Right ventricle myocardium inferior (tissue), 1 donor: ENCODE measurements at regions of chr12 and their contacts with region 1.

Region 1: GRCh38 chr12:6229224-6230218 is 29.3 kb downstream of the CD9 start:
- DNase-seq: no peak
- ATAC-seq: no peak

Region 2: GRCh38 chr12:6062757-6063735 is 166.5 kb before region 1 on chr12:
- intact Hi-C with region 1: no loop called
- DNase-seq: no peak
- ATAC-seq: peak; percentile 47

Region 3: DNA sequence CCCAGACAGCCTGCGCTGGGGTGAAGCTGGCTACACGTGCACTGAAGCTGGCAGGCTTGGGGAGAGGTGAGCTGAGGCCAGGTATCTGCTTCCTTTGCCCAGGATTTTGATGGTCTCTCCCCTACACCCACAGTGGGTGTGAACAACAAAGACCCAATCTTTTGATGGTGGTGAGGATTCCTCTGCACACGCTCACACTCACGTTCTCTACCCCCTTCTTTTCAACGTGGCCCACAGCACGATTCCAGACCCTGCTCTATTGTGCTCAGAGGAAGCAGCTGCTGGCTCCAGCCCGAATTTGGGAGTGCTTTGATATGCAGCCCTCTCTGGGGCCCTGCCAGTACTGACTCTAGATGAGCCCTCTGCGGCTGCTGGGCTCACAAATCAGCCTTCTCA is 24.4 kb before region 1 on chr12:
- intact Hi-C with region 1: loop called (anchors 2 kb)
- DNase-seq: peak; percentile 86
- ATAC-seq: peak; percentile 56

Region 4: GRCh38 chr12:6250343-6250742 is 20.8 kb after region 1 on chr12:
- intact Hi-C with region 1: no loop called
- DNase-seq: no peak
- ATAC-seq: peak; percentile 67

Region 5: GRCh38 chr12:6278439-6279255 is 49.1 kb after region 1 on chr12:
- intact Hi-C with region 1: loop called (anchors 2 kb)
- DNase-seq: peak; percentile 92
- ATAC-seq: peak; percentile 95